Panc1 (cell line): ENCODE measurements at regions of chr1 and their contacts with region 1.

Region 1: GRCh38 chr1:56831871-56832693 is 12.9 kb upstream of the FYB2 start:
- DNase-seq: peak; percentile 51
- ATAC-seq: peak; percentile 82
- H3K4me3 ChIP-seq: no peak overlapping the region
- H3K27ac ChIP-seq: no peak overlapping the region
- H3K4me1 ChIP-seq: no peaks in the 10 kb centered on the region
- H3K27me3 ChIP-seq: peaks cover 3% of the 10 kb centered on the region; the same call in 1 of the 2 replicates
- CTCF ChIP-seq: peak; percentile 96

Region 2: GRCh38 chr1:56816909-56817308 is 15.2 kb before region 1 on chr1:
- CTCF ChIA-PET with region 1: interaction called, 10 read pairs
- POLR2A ChIA-PET with region 1: no interaction called
- in situ Hi-C with region 1: no loop called
- intact Hi-C with region 1: no loop called
- DNase-seq: no peak
- ATAC-seq: no peak
- H3K4me3 ChIP-seq: no peak overlapping the region
- H3K27ac ChIP-seq: no peak overlapping the region
- H3K4me1 ChIP-seq: peaks cover 4% of the 10 kb centered on the region; the same call in 1 of the 2 replicates
- H3K27me3 ChIP-seq: peaks cover 8% of the 10 kb centered on the region
- CTCF ChIP-seq: no peak

Region 3: GRCh38 chr1:56967900-56968832 is 136.1 kb after region 1 on chr1:
- CTCF ChIA-PET with region 1: no interaction called
- POLR2A ChIA-PET with region 1: no interaction called
- in situ Hi-C with region 1: no loop called
- intact Hi-C with region 1: loop called (anchors 10 kb)
- DNase-seq: no peak
- ATAC-seq: no peak
- H3K4me3 ChIP-seq: no peak overlapping the region
- H3K27ac ChIP-seq: no peak overlapping the region
- H3K4me1 ChIP-seq: no peaks in the 10 kb centered on the region
- H3K27me3 ChIP-seq: peaks cover 2% of the 10 kb centered on the region; the same call in 1 of the 2 replicates
- CTCF ChIP-seq: peak; percentile 70

Region 4: DNA sequence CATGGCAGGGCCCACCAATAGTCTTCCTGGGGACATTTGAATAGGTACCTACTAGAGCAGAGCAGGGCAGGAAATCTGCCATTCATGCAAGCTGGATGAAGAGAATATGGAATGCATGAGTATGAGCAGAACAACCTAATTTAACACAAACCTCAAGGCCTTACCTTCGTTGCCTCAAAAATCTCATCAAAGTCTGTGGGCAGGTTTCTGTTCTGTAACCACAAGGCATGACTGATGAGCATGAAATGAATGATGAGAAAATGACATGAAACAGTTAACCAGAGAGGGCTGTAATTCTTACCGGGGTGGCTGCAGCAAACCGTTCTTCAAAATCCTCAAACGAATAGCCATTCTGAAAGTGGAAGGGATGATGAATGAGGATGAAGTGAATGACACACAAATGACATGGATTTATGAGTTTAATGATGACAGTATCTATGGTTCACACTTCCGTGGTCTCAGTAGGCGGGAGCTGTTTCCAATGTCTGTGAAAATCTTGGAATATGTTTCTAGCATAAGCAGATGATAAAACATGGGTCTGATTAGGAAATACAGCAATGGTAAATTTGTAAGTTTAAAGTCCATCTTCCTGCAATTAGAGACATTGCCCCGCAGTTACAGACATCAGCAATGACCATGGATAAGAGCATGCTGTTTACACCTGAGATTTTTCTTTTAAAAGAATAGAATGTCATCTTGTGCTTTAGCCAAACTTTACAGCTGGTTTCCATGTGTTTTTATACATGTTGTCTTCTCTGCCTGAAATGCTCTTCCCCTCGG is 201.3 kb after region 1 on chr1:
- CTCF ChIA-PET with region 1: no interaction called
- POLR2A ChIA-PET with region 1: no interaction called
- in situ Hi-C with region 1: no loop called
- intact Hi-C with region 1: loop called (anchors 10 kb)
- DNase-seq: no peak
- ATAC-seq: no peak
- H3K4me3 ChIP-seq: no peak overlapping the region
- H3K27ac ChIP-seq: no peak overlapping the region
- H3K4me1 ChIP-seq: no peaks in the 10 kb centered on the region
- H3K27me3 ChIP-seq: no peaks in the 10 kb centered on the region
- CTCF ChIP-seq: no peak

Region 5: DNA sequence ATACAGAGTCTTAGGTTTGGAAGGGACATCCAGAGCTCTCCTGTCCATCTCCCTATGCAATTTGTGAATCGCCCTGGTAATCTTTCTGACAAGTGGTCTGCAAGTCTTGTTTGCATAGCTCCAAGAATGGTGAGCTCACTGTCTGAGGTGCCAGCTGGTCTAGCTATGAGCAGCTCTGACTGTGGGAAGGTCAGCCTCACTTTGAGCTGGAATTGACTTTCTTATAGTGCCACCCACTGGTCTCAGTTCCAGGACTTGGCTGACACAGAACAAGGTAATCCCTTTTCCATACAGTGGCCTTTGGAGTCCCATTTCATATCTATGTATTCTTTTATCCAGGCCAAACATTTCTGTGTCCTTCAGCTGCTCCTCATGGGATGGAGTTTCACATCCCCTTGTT is 229.3 kb after region 1 on chr1:
- CTCF ChIA-PET with region 1: no interaction called
- POLR2A ChIA-PET with region 1: no interaction called
- in situ Hi-C with region 1: no loop called
- intact Hi-C with region 1: loop called (anchors 10 kb)
- DNase-seq: no peak
- ATAC-seq: no peak
- H3K4me3 ChIP-seq: no peak overlapping the region
- H3K27ac ChIP-seq: no peak overlapping the region
- H3K4me1 ChIP-seq: no peaks in the 10 kb centered on the region
- H3K27me3 ChIP-seq: 0 out of 2 replicates have a peak, but pooled peaks cover 4% of the 10 kb centered on the region
- CTCF ChIP-seq: peak; percentile 15

Region 6: GRCh38 chr1:58047265-58047858 is 1215.3 kb after region 1 on chr1:
- CTCF ChIA-PET with region 1: no interaction called
- POLR2A ChIA-PET with region 1: no interaction called
- in situ Hi-C with region 1: no loop called
- intact Hi-C with region 1: loop called (anchors 2 kb)
- DNase-seq: no peak
- ATAC-seq: peak; percentile 84
- H3K4me3 ChIP-seq: no peak overlapping the region
- H3K27ac ChIP-seq: no peak overlapping the region
- H3K4me1 ChIP-seq: no peaks in the 10 kb centered on the region
- H3K27me3 ChIP-seq: peaks cover 2% of the 10 kb centered on the region; the same call in 1 of the 2 replicates
- CTCF ChIP-seq: peak; percentile 89